HCT116 (cell line): ENCODE measurements at regions of chr15 and their contacts with region 1.

Region 1: DNA sequence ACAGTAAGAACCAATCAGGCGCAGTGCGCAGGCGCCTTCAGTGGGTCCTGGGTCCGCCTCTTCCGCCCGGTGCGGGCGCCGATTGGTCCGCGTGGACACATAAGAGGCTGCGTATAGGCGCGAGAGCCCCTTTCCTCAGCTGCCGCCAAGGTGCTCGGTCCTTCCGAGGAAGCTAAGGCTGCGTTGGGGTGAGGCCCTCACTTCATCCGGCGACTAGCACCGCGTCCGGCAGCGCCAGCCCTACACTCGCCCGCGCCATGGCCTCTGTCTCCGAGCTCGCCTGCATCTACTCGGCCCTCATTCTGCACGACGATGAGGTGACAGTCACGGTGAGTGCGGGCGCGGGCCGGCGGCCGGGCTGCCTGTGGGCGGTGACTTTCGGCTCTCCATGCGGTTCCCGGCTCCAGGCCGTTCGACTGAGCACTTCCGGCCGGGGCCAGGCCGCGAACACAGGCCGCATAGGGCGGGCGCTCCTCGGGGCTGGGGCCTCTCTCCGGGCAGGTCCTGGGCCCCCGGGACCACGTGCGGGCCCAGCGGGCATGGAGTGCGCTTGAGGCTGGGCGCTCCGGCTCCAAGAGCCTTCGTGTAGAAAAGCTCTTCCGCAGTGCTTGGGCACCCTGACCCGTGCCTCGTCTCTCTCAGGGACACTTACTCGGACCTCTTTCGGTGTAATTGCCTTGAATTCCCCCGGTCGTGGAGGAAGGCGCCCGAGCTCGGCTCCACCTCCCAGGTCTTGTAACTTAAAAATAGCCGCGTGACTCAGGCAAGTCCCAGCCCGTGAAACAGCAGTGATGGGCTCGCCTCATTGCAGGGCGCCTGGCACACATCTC is at the start of gene RPLP1:
- DNase-seq: peak; percentile 81
- ATAC-seq: peak; percentile 85
- H3K4me3 ChIP-seq: peak within 1 kb of the TSS; percentile 96 to 98
- H3K27ac ChIP-seq: peak within 1 kb of the TSS; percentile 83
- H3K4me1 ChIP-seq: peaks cover 9 to 20% of the 10 kb centered on the region in 2 experiments; a peak in 3 of 4 replicates
- H3K27me3 ChIP-seq: no peaks in the 10 kb centered on the region
- CTCF ChIP-seq: no peak
- POLR2A ChIP-seq: peak; percentile 99
- RAD21 ChIP-seq: no peak
- total RNA-seq, gene RPLP1: 3,138 TPM

Region 2: DNA sequence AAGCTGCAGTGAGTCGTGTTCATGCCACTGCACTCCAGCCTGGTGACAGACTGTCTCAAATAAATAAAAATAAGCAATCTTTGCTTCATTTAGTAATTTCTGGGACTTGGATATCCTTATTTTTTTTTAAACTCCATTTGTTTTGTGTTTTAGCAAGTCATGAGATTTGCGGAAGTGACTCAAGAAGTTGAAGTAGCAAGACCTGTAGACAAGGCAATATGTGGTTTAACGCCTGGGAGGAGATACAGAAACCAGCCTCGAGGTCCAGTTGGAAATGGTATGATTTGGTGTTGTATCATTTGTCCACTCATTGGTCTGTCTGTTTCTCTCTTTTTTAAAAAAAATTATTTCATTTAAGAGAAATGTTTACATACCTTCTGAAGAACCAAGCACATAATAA is 16.9 kb before region 1 on chr15:
- CTCF ChIA-PET with region 1: no interaction called
- POLR2A ChIA-PET with region 1: interaction called, 10 read pairs
- RAD21 ChIA-PET with region 1: no interaction called
- intact Hi-C with region 1: no loop called
- DNase-seq: no peak
- ATAC-seq: no peak
- H3K4me3 ChIP-seq: no peak overlapping the region
- H3K27ac ChIP-seq: no peak overlapping the region
- H3K4me1 ChIP-seq: no peaks in the 10 kb centered on the region
- H3K27me3 ChIP-seq: no peaks in the 10 kb centered on the region
- CTCF ChIP-seq: no peak
- POLR2A ChIP-seq: no peak
- RAD21 ChIP-seq: no peak

Region 3: GRCh38 chr15:69491038-69491505 is 38.2 kb after region 1 on chr15:
- CTCF ChIA-PET with region 1: no interaction called
- POLR2A ChIA-PET with region 1: no interaction called
- RAD21 ChIA-PET with region 1: no interaction called
- intact Hi-C with region 1: no loop called
- DNase-seq: no peak
- ATAC-seq: no peak
- H3K4me3 ChIP-seq: no peak overlapping the region
- H3K27ac ChIP-seq: no peak overlapping the region
- H3K4me1 ChIP-seq: no peaks in the 10 kb centered on the region
- H3K27me3 ChIP-seq: no peaks in the 10 kb centered on the region
- CTCF ChIP-seq: no peak
- POLR2A ChIP-seq: no peak
- RAD21 ChIP-seq: no peak

Region 4: GRCh38 chr15:69987492-69988482 is 534.9 kb after region 1 on chr15:
- CTCF ChIA-PET with region 1: no interaction called
- POLR2A ChIA-PET with region 1: no interaction called
- RAD21 ChIA-PET with region 1: no interaction called
- intact Hi-C with region 1: no loop called
- DNase-seq: no peak
- ATAC-seq: no peak
- H3K4me3 ChIP-seq: no peak overlapping the region
- H3K27ac ChIP-seq: no peak overlapping the region
- H3K4me1 ChIP-seq: peaks cover 0 to 3% of the 10 kb centered on the region in 2 experiments; a peak in 1 of 4 replicates
- H3K27me3 ChIP-seq: peaks cover 36% of the 10 kb centered on the region
- CTCF ChIP-seq: no peak
- POLR2A ChIP-seq: no peak
- RAD21 ChIP-seq: no peak